T-cell (primary cell): ENCODE measurements at regions of chr2 and their contacts with region 1.

Region 1: GRCh38 chr2:214782671-214783070 is 26.8 kb downstream of the BARD1 start:
- DNase-seq: no peak
- ATAC-seq: no peak
- H3K4me3 ChIP-seq: no peak overlapping the region
- H3K4me3 Mint-ChIP-seq: no peak overlapping the region
- H3K27ac ChIP-seq: no peak overlapping the region
- H3K27ac Mint-ChIP-seq: no peak overlapping the region
- H3K4me1 ChIP-seq: no peaks in the 10 kb centered on the region
- H3K4me1 Mint-ChIP-seq: peaks cover 0 to 11% (median 0%) of the 10 kb centered on the region in 3 donors
- H3K27me3 ChIP-seq: no peaks in the 10 kb centered on the region
- H3K27me3 Mint-ChIP-seq: no peaks in the 10 kb centered on the region

Region 2: DNA sequence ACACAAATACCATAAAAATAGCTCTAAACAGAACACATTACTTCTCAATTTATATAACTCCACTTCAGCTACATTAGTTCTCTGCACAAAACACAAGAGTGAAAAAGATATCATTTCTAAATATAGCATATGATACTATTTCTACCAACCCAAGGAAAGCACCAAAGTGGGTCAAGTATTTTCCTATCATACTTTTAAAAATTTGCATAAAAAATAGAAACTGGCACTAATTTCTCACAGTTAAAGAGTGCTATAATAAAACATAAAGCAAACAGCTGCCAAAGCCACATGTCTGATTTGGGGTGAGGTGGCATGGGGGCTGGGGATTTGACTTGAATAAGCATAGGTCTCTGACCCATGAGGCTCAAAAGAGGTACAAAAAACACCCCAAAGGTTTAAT is 34.7 kb before region 1 on chr2:
- CTCF ChIA-PET with region 1: no interaction called
- POLR2A ChIA-PET with region 1: no interaction called
- DNase-seq: no peak
- ATAC-seq: no peak
- H3K4me3 ChIP-seq: no peak overlapping the region
- H3K4me3 Mint-ChIP-seq: no peak overlapping the region
- H3K27ac ChIP-seq: no peak overlapping the region
- H3K27ac Mint-ChIP-seq: no peak overlapping the region
- H3K4me1 ChIP-seq: no peaks in the 10 kb centered on the region
- H3K4me1 Mint-ChIP-seq: peaks cover 0 to 3% (median 0%) of the 10 kb centered on the region in 3 donors
- H3K27me3 ChIP-seq: no peaks in the 10 kb centered on the region
- H3K27me3 Mint-ChIP-seq: no peaks in the 10 kb centered on the region

Region 3: GRCh38 chr2:214809751-214810564 is 27.3 kb after region 1 on chr2:
- CTCF ChIA-PET with region 1: no interaction called
- POLR2A ChIA-PET with region 1: interaction called in 1 of 2 experiments, 14 read pairs
- DNase-seq: peak; percentile 76 to 99 (median 86)
- ATAC-seq: peak; percentile 79 to 87 (median 85)
- H3K4me3 ChIP-seq: peak overlapping the region; percentile 68 to 89
- H3K4me3 Mint-ChIP-seq: peak overlapping the region; percentile 87 to 98 (median 91)
- H3K27ac ChIP-seq: peak overlapping the region; percentile 70
- H3K27ac Mint-ChIP-seq: peak overlapping the region; percentile 56 to 60
- H3K4me1 ChIP-seq: peaks cover 8 to 17% of the 10 kb centered on the region in 2 experiments
- H3K4me1 Mint-ChIP-seq: peaks cover 33 to 40% (median 37%) of the 10 kb centered on the region in 3 donors
- H3K27me3 ChIP-seq: no peaks in the 10 kb centered on the region
- H3K27me3 Mint-ChIP-seq: no peaks in the 10 kb centered on the region